ENCODE measurements at regions of chr12 and their contacts with region 1.

Region 1: GRCh38 chr12:62732861-62733427 is 202.0 kb downstream of the PPM1H start:
- DNase-seq: peak; percentile 74
- H3K4me3 Mint-ChIP-seq: no peak overlapping the region
- H3K27ac Mint-ChIP-seq: peak overlapping the region; percentile 97
- H3K4me1 Mint-ChIP-seq: peaks cover 60% of the 10 kb centered on the region
- H3K27me3 Mint-ChIP-seq: no peaks in the 10 kb centered on the region
- CTCF ChIP-seq: no peak

Region 2: GRCh38 chr12:62575036-62575435 is 157.9 kb before region 1 on chr12:
- CTCF ChIA-PET with region 1: no interaction called
- intact Hi-C with region 1: no loop called
- DNase-seq: no peak
- H3K4me3 Mint-ChIP-seq: no peak overlapping the region
- H3K27ac Mint-ChIP-seq: no peak overlapping the region
- H3K4me1 Mint-ChIP-seq: no peaks in the 10 kb centered on the region
- H3K27me3 Mint-ChIP-seq: no peaks in the 10 kb centered on the region
- CTCF ChIP-seq: no peak

Region 3: DNA sequence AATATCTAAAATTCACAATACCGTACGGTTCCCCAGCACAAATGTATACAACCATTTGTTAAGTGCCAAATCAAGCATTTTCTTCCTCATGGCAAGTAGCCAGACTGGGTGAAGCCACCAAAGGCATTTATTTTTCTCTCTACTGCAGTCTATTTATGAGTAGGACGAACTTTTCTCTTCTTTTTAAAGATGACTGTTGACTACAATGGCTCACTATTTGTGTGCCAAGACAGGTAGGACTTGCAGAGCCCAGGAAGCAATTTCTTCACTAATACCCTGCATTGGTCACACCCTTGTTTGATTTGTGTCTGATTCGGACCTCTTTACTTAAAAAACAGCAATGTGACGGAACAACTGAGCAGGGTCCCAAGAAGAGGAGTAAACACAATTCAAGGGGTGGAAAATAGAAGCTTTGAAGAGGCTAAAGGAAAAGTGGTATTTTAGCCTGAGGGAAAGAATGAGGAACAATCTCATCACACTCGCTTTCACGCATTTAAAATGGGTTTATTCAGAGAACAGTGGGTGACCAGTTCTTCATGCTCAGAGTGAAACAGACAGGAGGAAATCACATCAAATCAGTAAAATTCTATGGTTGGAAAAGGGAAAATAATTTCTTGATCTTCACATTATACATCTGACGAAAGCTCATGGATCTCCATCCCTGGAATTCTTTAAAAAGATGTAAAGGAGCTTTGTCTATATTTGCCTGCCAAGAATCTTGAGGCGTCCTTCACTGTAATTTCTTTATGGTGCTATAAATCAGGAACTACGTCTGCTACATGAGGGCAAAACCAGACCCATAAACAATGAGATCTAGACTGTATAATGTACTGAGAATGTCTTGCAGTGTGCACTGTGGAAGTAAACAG is 18.2 kb after region 1 on chr12:
- CTCF ChIA-PET with region 1: no interaction called
- intact Hi-C with region 1: loop called (anchors 1 kb)
- DNase-seq: peak; percentile 67
- H3K4me3 Mint-ChIP-seq: peak overlapping the region; percentile 23
- H3K27ac Mint-ChIP-seq: peak overlapping the region; percentile 90
- H3K4me1 Mint-ChIP-seq: peaks cover 31% of the 10 kb centered on the region
- H3K27me3 Mint-ChIP-seq: no peaks in the 10 kb centered on the region
- CTCF ChIP-seq: no peak

Region 4: GRCh38 chr12:62841846-62842245 is 108.9 kb after region 1 on chr12:
- CTCF ChIA-PET with region 1: no interaction called
- intact Hi-C with region 1: no loop called
- DNase-seq: no peak
- H3K4me3 Mint-ChIP-seq: no peak overlapping the region
- H3K27ac Mint-ChIP-seq: no peak overlapping the region
- H3K4me1 Mint-ChIP-seq: peaks cover 49% of the 10 kb centered on the region
- H3K27me3 Mint-ChIP-seq: no peaks in the 10 kb centered on the region
- CTCF ChIP-seq: no peak

Measured in Calu3 (cell line).